ENCODE measurements at regions of chr11 and their contacts with region 1.

Region 1: DNA sequence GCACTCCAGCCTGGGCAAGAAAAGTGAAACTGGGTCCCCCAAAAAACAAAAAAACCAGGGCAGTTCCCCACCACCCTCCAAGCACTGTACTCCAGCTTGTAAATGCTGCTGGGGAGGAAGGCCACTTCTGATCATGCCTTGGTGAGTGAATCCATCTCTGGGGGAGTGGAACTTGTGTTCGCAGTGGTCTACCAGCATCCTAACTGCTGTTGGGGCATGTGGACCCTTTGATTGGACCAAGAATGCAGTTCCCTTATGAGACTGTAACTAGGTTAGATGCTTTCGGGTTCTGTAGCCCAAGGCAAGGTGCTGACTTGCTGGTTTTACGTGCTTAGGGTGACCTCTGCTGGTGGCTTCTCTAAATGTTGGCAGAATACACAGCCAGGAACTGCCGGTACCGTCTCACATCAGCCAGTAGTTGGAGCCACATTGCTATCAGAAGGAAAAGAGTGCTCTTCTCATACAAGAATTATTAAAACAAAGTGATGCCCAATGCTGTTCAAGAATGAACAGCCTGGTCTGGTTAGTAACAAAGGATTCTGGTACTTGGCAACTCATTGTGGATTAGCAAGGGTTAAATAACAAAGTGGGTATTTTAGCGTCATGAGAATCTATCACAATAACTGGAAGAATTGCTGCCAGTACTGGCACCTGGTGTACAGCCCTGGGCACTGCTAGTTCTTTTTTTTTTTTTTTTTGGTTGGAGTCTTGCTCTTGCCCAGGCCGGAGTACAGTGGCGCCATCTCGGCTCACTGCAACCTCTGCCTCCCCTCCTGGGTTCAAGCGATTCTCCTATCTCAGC is 13.0 kb downstream of the EIF1AD start:
- DNase-seq: peak; percentile 82
- ATAC-seq: peak; percentile 99

Region 2: GRCh38 chr11:65711785-65712632 is 277.0 kb before region 1 on chr11 and contains the start of gene KAT5:
- intact Hi-C with region 1: loop called (anchors 5 kb)
- DNase-seq: peak; percentile 99
- ATAC-seq: peak; percentile 95
- total RNA-seq, gene KAT5: 40.8 TPM

Region 3: DNA sequence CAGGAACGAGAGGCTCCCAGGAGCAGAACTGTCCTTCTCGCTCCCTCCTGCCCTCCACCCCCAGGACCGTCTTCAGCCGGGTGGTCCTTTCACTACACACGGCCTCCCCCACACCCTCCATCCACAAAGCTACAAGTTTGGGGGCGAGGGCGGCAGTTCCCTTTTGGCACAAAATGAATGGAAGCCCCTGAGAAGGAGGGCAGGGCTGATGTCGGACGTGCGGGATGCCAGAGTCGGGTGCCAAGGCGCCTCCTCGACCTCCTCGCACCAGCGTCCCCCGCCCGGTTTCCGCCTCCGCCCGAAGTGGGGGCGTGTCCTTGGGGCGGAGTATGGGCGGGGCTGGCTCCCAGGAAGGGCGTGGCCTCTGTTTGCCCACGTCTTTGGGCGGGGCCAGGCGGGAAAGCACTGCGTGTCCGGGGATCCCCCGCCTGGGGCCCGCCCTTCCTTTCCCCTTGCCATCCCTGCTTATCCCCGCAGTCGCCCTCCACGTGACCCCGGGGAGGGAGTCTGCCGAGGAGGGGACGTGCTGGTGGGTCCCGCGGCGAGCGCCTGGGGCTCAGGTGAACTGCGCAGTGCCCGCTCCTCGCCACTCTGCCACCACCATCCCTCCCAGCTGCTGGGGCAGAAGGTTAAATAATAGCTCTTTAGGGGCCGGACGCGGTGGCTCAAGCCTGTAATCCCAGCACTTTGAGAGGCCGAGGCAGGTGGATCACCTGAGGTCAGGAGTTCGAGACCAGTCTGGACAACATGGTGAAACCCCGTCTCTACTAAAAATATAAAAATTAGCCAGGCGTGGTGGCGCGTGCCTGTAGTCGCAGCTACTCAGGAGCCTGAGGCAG is 115.5 kb before region 1 on chr11:
- intact Hi-C with region 1: no loop called
- DNase-seq: peak; percentile 98
- ATAC-seq: peak; percentile 96

Region 4: DNA sequence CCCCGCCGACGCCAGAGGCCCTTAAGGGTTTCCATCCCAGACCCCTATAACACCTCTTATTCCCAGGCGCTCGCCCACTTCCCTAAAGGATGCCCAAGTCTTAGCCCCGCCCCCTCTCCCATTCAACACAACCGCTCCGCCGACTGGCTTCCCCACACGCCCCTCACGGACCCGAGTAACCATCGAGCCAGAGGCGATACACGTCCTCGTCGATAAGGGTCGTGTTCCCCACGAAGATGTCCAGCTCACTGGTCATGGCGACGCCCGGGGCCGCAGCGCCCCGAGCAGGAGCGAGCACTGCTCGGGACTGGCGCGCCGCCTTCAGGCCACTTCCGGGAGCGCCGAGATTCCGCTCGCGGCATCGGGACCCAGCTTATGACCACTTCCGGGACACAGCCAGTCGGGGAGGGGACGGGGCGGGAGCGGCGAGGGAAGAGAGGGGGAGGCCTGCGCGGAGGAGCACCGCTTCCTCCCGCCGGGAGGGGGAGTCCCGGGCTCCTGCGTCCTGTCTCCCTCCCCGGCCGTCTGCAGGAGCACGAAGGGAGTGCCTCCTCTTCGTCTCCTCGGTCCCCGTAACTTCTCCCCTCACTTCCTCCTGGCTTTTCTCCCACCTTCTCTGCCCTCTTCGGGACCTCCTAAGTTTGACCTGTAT is 100.7 kb before region 1 on chr11 and contains the start of gene FIBP:
- intact Hi-C with region 1: loop called (anchors 2 kb)
- DNase-seq: peak; percentile 98
- ATAC-seq: peak; percentile 86
- total RNA-seq, gene FIBP: 37.7 TPM

Measured in Right ventricle myocardium superior (tissue), 1 donor.